ENCODE measurements at regions of chr20 and their contacts with region 1.

Region 1: DNA sequence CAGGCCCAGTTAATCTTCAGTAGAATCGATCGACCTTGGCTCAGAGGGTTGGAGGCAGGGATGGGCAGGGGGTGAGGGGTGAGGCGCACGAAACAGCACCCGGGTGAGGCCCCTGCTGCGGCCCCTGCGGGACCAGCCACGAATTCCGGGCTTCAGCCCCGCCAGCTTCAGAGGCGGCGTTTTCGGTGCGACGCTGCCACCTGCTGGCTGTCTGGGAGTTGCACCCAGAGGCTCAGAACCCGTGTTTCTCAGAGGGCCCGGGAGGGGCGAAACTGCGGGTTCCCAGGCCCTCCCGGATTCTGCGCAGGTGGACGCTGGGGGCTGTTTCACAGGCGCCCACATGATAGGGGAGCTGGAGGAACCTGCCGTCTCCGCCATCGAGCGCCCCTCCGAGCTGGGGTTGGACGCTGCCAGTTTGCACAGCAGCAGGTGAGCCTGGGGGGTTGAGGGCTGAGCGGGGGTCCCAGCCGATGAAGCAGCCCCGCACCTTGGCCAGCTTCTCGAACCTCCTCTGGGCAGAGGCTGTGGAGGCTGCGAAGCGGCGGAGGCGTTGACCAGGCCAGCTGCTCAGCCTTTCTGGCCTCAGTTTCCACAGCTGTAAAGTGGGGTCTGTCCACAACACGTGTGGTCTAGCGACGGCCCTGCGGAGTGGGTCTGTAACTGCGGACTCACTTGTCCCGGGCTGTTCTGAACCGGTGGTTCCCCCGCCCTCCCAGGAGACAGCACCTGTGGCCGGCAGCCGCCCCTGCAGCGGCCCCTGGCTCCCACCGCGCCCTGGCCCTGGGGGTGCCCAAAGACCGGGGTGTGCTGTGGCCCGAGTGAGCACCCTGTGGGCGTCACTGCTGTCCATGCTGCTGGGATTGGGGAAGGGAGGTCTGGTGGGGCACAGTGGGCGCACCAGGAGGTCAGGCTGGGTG is 2.5 kb upstream of the BHLHE23 start:
- DNase-seq: peak; percentile 66
- H3K4me3 Mint-ChIP-seq: no peak overlapping the region
- H3K27ac Mint-ChIP-seq: no peak overlapping the region
- H3K4me1 Mint-ChIP-seq: peaks cover 6% of the 10 kb centered on the region
- H3K27me3 Mint-ChIP-seq: peaks cover 58% of the 10 kb centered on the region
- CTCF ChIP-seq: peak; percentile 89

Region 2: GRCh38 chr20:62822788-62823651 is 186.3 kb before region 1 on chr20:
- CTCF ChIA-PET with region 1: no interaction called
- POLR2A ChIA-PET with region 1: no interaction called
- intact Hi-C with region 1: loop called (anchors 1 kb)
- DNase-seq: peak; percentile 66
- H3K4me3 Mint-ChIP-seq: no peak overlapping the region
- H3K27ac Mint-ChIP-seq: no peak overlapping the region
- H3K4me1 Mint-ChIP-seq: peaks cover 7% of the 10 kb centered on the region
- H3K27me3 Mint-ChIP-seq: no peaks in the 10 kb centered on the region
- CTCF ChIP-seq: peak; percentile 49

Region 3: DNA sequence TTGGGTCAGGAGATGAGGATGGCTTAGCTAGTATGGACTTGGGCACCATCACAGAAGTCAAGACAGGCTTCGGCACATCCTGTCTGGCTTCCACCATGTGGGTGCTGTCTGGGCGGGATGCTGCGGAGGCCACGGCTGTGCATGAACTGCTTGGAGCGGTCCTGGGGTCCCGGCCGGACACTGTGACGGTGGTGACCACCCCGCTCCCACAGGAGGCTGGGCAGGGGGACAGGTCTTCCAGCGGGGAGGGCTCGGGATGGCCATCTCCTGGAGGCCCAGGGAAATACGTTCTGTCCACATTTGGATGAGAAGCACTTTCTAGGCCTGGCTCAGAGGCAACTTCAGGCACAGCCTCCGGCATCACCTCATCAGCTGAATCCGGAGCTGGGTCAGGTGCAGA is 115.6 kb before region 1 on chr20:
- CTCF ChIA-PET with region 1: interaction called, 14 read pairs
- POLR2A ChIA-PET with region 1: interaction called, 5 read pairs
- intact Hi-C with region 1: no loop called
- DNase-seq: no peak
- H3K4me3 Mint-ChIP-seq: no peak overlapping the region
- H3K27ac Mint-ChIP-seq: no peak overlapping the region
- H3K4me1 Mint-ChIP-seq: no peaks in the 10 kb centered on the region
- H3K27me3 Mint-ChIP-seq: no peaks in the 10 kb centered on the region
- CTCF ChIP-seq: peak; percentile 16

Region 4: DNA sequence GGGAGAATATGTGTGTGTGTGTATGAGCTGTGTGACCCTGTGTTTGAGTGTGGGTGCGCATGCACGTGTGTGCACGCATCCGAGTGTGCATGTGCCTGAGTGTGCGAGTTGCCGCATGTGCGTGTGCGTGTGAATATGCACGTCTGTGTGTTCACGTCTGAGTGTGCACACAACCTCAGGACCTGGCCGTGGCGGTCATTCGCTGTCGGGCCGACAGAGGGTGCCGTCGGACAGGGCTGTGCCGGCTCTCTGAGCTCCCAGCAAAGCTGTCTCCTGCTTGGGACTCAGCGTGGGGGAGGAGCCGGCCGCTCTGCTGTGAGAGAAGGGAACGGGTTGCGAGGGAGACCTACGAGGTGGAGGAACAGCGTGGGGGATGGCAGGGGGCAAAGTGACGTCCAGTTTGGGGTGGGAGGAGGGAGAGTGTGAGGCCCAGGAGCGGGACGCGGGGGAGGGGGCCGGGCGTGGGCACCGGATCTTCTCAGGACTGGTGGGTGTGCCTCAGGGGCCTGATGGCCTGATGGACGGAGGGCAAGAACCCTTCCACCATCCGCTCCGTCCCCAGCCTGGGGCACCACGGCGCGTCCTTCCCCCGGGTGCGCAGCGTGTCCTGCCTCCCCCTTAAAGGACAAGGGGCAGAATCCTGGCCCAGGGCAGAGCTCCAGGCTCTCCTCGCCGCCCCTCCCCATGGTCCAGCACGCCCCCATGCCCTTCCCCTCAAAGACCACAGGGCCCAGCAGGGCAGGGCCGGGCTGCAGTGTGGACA is 36.9 kb before region 1 on chr20:
- CTCF ChIA-PET with region 1: interaction called, 32 read pairs
- POLR2A ChIA-PET with region 1: interaction called, 4 read pairs
- intact Hi-C with region 1: loop called (anchors 1 kb)
- DNase-seq: peak; percentile 74
- H3K4me3 Mint-ChIP-seq: peak overlapping the region; percentile 41
- H3K27ac Mint-ChIP-seq: no peak overlapping the region
- H3K4me1 Mint-ChIP-seq: peaks cover 6% of the 10 kb centered on the region
- H3K27me3 Mint-ChIP-seq: peaks cover 7% of the 10 kb centered on the region
- CTCF ChIP-seq: peak; percentile 93

Region 5: GRCh38 chr20:62980970-62981369 is 28.3 kb before region 1 on chr20:
- CTCF ChIA-PET with region 1: interaction called, 11 read pairs
- POLR2A ChIA-PET with region 1: interaction called, 3 read pairs
- intact Hi-C with region 1: no loop called
- DNase-seq: no peak
- H3K4me3 Mint-ChIP-seq: no peak overlapping the region
- H3K27ac Mint-ChIP-seq: no peak overlapping the region
- H3K4me1 Mint-ChIP-seq: no peaks in the 10 kb centered on the region
- H3K27me3 Mint-ChIP-seq: peaks cover 59% of the 10 kb centered on the region
- CTCF ChIP-seq: no peak

Measured in MCF 10A (cell line).